ENCODE measurements at regions of chr4 and their contacts with region 1.

Region 1: GRCh38 chr4:112231779-112232713 is at the start of gene AP1AR:
- DNase-seq: peak; percentile 91
- ATAC-seq: peak; percentile 73
- H3K4me3 Mint-ChIP-seq: peak within 1 kb of the TSS; percentile 100
- H3K27ac Mint-ChIP-seq: peak within 1 kb of the TSS; percentile 99
- H3K4me1 Mint-ChIP-seq: peaks cover 30% of the 10 kb centered on the region
- H3K27me3 Mint-ChIP-seq: peaks cover 1% of the 10 kb centered on the region
- CTCF ChIP-seq: no peak
- total RNA-seq, gene AP1AR: 20.1 and 24.3 TPM in 2 replicates

Region 2: GRCh38 chr4:111937368-111937767 is 294.7 kb before region 1 on chr4:
- CTCF ChIA-PET with region 1: no interaction called
- POLR2A ChIA-PET with region 1: no interaction called
- intact Hi-C with region 1: loop called (anchors 10 kb)
- DNase-seq: no peak
- ATAC-seq: peak; percentile 40
- H3K4me3 Mint-ChIP-seq: no peak overlapping the region
- H3K27ac Mint-ChIP-seq: no peak overlapping the region
- H3K4me1 Mint-ChIP-seq: no peaks in the 10 kb centered on the region
- H3K27me3 Mint-ChIP-seq: peaks cover 4% of the 10 kb centered on the region
- CTCF ChIP-seq: peak; percentile 21

Region 3: DNA sequence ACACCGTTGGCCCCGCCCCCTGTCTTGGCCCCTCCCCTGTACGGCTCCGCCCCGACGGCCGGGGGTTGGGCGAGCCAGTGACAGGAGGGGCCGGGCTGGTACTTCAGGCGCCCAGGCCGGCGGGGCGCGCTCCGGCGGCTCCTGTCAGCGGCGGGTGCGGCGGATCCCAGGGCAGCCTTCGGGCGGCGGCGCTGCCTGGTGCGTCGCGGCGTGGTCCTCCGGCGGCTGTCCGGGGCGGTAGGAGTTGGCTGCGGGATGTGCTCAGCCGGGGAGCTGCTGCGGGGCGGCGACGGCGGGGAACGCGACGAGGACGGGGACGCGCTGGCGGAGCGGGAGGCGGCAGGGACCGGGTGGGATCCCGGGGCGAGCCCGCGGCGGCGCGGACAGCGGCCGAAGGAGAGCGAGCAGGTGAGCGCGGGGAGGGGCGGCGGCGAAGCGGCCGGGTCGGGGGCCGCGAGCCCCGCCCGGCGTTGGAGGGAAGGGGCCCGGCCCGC is 86.7 kb before region 1 on chr4 and contains the start of gene FAM241A:
- CTCF ChIA-PET with region 1: interaction called, 3 read pairs
- POLR2A ChIA-PET with region 1: interaction called, 3 read pairs
- intact Hi-C with region 1: loop called (anchors 1 kb)
- DNase-seq: peak; percentile 86
- ATAC-seq: peak; percentile 97
- H3K4me3 Mint-ChIP-seq: peak within 1 kb of the TSS; percentile 97
- H3K27ac Mint-ChIP-seq: peak within 1 kb of the TSS; percentile 80
- H3K4me1 Mint-ChIP-seq: peaks cover 19% of the 10 kb centered on the region
- H3K27me3 Mint-ChIP-seq: peaks cover 5% of the 10 kb centered on the region
- CTCF ChIP-seq: no peak
- total RNA-seq, gene FAM241A: 1.1 and 1.5 TPM in 2 replicates

Region 4: GRCh38 chr4:112266821-112267220 is 34.8 kb after region 1 on chr4:
- CTCF ChIA-PET with region 1: interaction called, 5 read pairs
- POLR2A ChIA-PET with region 1: no interaction called
- intact Hi-C with region 1: loop called (anchors 5 kb)
- DNase-seq: no peak
- ATAC-seq: no peak
- H3K4me3 Mint-ChIP-seq: no peak overlapping the region
- H3K27ac Mint-ChIP-seq: no peak overlapping the region
- H3K4me1 Mint-ChIP-seq: peaks cover 2% of the 10 kb centered on the region
- H3K27me3 Mint-ChIP-seq: no peaks in the 10 kb centered on the region
- CTCF ChIP-seq: no peak

Region 5: DNA sequence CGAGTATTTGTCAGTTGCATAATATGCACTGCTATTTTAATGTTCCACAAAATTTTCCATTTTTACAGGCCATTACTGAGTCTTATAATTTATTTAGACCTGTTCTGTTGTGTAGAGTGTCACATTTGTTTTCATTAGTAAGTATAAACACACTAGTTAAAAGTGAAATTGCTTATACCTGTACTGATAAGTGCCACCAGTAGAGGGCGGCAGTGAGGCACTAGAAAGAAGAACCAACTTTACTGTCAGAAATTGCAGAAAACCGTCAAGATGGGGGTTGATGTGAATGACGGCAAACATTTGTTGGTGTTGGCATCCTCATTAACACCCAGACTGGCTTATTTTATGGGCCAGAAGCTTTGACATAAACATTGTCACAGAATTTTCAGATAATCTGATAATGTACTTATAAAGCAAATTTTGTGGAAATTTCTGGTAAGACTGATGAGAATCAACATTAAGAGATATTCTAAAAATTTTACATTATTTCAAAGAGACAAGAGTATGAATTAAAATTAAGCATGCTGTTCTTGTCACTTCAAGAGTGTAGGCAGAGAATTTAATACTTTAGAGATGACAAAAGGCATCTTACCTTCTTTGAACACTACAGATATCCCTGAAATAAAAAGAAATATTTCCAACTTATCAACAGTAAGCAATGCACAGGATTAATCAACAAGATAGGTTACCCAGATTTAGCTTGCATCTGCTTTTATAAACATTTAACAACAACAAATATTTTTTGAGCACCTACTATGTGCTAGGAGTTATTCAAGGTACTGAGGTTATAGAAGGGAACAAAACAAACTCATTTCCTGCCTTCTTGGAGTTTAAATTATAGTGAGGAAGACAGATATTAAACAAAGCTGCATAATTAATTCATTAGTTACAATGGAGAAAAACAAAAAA is 90.0 kb after region 1 on chr4:
- CTCF ChIA-PET with region 1: no interaction called
- POLR2A ChIA-PET with region 1: no interaction called
- intact Hi-C with region 1: loop called (anchors 1 kb)
- DNase-seq: peak; percentile 39
- ATAC-seq: peak; percentile 73
- H3K4me3 Mint-ChIP-seq: no peak overlapping the region
- H3K27ac Mint-ChIP-seq: no peak overlapping the region
- H3K4me1 Mint-ChIP-seq: peaks cover 15% of the 10 kb centered on the region
- H3K27me3 Mint-ChIP-seq: no peaks in the 10 kb centered on the region
- CTCF ChIP-seq: peak; percentile 97

Region 6: DNA sequence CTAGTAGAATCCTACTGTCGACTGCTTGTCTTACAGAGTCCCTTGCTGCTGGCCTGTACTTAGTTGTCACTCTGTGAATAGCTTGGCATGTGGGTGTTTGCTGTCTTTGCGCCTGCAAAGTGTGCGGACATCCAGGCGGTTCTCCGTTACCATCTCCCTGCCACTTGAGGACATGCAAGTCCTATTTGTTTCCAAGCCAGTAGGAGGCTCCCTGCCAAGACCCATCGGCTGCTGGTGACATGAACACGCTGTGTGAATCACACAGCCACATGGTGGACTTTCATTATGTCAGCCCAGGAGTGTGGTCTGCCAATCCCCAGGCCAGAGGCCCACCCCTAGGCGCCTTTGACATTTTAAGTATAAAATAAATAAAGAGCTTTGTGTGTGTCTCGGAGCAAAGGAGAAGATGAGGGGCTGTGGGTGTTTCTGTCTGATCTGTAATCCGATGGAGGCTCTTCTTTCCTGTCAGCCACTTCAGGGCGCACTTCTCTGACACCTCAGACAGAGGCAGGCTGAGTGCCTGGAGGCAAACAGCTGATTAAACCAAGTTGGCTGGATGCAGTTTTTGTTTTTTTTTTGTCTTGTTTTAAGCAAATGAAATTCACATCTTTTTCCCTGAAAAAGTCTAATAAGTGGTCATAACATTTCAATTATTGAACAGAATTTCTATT is 116.6 kb after region 1 on chr4:
- CTCF ChIA-PET with region 1: no interaction called
- POLR2A ChIA-PET with region 1: no interaction called
- intact Hi-C with region 1: no loop called
- DNase-seq: no peak
- ATAC-seq: no peak
- H3K4me3 Mint-ChIP-seq: no peak overlapping the region
- H3K27ac Mint-ChIP-seq: no peak overlapping the region
- H3K4me1 Mint-ChIP-seq: no peaks in the 10 kb centered on the region
- H3K27me3 Mint-ChIP-seq: no peaks in the 10 kb centered on the region
- CTCF ChIP-seq: no peak

Region 7: GRCh38 chr4:112552668-112553067 is 320.6 kb after region 1 on chr4:
- CTCF ChIA-PET with region 1: no interaction called
- POLR2A ChIA-PET with region 1: no interaction called
- intact Hi-C with region 1: no loop called
- DNase-seq: no peak
- ATAC-seq: no peak
- H3K4me3 Mint-ChIP-seq: no peak overlapping the region
- H3K27ac Mint-ChIP-seq: no peak overlapping the region
- H3K4me1 Mint-ChIP-seq: no peaks in the 10 kb centered on the region
- H3K27me3 Mint-ChIP-seq: no peaks in the 10 kb centered on the region
- CTCF ChIP-seq: no peak

Region 8: DNA sequence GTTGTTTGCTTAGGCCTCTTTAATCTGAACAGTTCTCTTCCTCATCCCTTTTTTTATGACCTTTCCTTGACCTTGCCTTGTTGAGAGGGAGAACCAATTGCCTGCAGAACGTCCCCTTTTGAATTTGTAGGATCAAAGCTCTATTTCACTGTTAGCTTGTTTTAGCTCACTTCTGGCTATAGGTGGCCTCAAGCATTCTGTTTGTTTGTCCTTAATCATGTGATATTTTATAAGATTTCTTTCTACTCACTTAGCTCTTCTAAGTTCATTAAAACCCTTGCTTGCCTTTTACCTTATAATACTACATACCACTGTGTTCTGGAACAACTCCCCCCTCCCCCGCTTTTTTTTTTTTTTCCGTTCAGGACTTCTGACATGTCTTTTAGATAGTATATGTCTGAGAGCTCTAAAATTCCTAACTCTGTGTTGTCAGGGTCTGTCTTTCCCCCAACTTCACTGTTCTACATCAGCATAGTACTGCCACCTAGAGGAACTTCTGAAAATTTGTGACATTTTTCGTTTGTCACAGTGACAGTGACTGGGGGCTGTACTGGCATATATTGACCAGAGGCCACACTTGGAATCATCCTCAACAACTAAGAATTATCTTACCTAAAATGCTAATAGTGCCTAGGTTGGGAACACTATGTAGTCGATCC is 533.4 kb after region 1 on chr4:
- CTCF ChIA-PET with region 1: no interaction called
- POLR2A ChIA-PET with region 1: no interaction called
- intact Hi-C with region 1: loop called (anchors 1 kb)
- DNase-seq: no peak
- ATAC-seq: peak; percentile 54
- H3K4me3 Mint-ChIP-seq: no peak overlapping the region
- H3K27ac Mint-ChIP-seq: no peak overlapping the region
- H3K4me1 Mint-ChIP-seq: peaks cover 3% of the 10 kb centered on the region
- H3K27me3 Mint-ChIP-seq: peaks cover 4% of the 10 kb centered on the region
- CTCF ChIP-seq: no peak